ENCODE measurements at regions of chr12 and their contacts with region 1.

Region 1: DNA sequence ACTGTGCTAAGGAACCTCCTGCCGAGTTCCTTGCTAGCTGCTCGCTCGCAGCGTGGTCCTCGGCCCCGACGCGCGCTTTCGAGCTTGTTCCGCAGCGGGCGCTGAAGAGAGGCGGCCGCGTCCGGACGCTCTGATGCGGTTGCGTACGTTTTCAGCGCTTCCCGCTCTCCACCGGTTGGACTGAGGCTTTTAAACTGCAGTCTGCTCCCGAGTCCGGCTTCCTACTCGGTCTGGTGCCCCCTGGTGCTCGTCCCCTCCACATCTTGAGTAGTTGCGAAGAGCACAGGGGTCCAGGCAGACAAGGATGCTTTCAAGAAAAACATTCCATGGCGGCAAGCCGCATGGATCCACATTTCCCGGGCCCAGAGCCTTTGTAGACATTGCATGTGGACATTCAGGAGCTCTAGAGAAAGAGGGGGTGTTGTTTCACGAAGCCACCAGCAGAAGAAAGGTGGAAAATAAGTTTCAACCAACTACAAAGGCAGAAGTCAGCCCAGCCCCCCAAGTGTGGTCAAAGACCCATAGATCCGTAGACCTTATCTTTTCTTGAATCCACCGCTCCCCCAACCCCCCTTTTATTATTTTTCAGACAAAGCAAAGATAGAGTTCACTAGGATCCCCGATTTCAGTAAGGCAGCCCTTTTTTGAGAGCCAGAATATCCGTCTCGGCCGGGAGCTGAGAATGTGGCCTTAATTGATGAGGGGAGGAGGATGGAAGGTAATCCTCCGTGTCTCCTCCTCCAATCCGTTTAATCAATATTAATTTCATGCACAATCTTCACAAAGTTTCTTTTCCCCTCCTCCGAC is 984 bp upstream of the WNK1 start:
- DNase-seq: peak; percentile 78
- CTCF ChIP-seq: peak; percentile 68

Region 2: DNA sequence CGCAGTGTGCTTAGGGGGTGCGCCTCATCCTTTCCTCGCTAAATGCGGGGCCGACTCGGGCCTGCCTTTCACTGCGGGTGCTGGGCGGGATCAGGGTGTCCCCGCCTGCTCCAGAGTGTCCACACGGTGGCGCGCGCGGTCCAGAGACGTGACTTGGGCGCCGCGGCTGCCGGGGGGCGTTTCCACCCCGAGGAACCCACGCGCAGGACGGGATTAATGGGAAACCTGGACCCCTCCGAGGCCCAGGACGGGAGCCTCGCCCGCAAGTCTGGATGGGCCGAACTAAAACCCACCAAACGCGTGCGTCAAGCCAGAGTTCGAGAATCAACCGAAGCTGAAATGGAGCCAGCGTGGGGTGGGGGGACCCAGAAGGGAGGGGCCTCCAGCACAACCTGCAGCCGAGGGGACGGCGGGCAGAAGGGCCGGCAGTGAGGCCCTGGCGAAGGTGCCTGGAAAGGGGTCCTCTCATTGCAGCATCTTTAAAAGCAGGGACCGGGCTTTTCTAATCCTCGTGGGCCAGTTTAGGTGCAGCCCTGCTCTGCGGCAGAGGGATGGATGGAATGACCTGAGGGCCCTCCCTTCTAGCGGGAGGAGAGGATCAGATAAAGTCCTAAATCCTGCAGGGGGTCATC is 181.5 kb before region 1 on chr12:
- CTCF ChIA-PET with region 1: interaction called, 32 read pairs
- POLR2A ChIA-PET with region 1: no interaction called
- DNase-seq: peak; percentile 94
- CTCF ChIP-seq: peak; percentile 95

Region 3: GRCh38 chr12:614411-614970 is 136.9 kb before region 1 on chr12:
- CTCF ChIA-PET with region 1: interaction called, 52 read pairs
- POLR2A ChIA-PET with region 1: no interaction called
- DNase-seq: peak; percentile 63
- CTCF ChIP-seq: peak; percentile 59

Region 4: DNA sequence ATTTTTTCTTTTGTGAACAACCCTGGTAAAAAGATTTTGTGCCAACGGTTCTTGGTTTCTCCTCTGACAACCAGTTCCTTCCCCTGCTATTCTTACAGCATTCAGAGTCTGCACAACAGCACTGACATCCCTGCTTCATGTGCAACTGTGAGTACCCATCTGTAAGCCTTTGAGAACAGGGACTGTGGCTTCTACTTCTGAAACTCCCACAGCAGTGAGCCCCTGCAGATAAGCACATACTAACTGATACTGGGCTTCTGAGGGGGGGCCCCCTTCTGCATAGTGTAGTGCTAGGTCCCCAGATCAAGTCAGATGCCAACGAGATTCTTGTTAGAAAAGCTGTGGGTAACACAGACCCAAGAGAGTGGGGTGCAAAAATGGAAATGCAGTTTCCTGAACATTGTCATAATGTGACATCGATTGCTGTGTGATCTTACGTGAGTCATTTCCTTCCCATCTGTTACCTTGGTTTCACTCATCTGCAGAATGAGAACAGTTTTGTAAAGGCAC is 77.1 kb before region 1 on chr12:
- CTCF ChIA-PET with region 1: interaction called, 33 read pairs
- POLR2A ChIA-PET with region 1: interaction called, 9 read pairs
- DNase-seq: peak; percentile 66
- CTCF ChIP-seq: no peak

Region 5: GRCh38 chr12:724194-724855 is 27.1 kb before region 1 on chr12:
- CTCF ChIA-PET with region 1: interaction called, 40 read pairs
- POLR2A ChIA-PET with region 1: interaction called, 3 read pairs
- DNase-seq: no peak
- CTCF ChIP-seq: no peak

Region 6: DNA sequence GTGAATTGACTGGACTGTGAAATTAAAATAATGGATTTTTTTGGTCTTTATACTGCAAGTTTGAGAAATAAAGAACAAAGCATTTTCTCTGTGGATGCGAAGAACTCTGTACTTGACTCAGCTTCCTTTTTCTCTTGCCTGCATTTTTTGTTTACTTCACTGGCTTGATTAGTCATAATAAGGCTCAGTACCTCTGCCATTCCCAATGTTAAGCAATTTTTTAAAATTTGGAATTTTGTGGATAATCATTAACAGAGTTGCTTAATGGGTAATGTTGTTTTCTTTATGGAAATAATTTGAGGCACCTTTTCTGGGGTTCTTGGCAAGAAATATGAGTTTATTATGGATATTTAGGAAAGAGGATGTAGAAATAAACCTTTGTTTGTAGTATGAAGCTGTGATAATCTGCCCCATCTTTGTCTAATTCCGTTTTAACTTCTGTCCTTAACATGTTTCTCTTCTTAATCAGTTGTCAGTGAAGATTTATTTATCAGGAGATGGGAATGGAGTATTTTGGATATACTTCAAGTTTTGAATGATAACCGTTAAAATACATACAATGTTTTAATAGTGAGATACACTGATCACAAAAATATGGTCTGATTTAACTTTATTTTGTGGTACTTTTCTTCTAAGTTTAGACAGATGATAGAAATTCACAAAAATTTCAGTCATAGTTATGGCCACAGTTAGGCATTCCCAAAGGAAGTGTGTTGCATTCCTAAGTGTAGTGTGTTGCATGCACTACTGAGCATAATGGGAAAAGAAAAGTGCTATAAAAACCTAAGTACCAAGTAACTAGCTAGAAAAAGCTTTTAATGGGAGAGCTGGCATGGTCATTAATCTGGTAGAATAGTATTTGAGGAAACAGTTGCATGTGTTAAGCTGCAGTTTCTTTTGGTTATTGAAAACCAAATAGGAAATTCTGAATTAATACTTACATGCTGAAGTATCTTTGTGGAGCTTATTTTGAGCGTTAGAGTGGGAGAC is 28.6 kb after region 1 on chr12:
- CTCF ChIA-PET with region 1: interaction called, 18 read pairs
- POLR2A ChIA-PET with region 1: no interaction called
- DNase-seq: no peak
- CTCF ChIP-seq: no peak

Region 7: DNA sequence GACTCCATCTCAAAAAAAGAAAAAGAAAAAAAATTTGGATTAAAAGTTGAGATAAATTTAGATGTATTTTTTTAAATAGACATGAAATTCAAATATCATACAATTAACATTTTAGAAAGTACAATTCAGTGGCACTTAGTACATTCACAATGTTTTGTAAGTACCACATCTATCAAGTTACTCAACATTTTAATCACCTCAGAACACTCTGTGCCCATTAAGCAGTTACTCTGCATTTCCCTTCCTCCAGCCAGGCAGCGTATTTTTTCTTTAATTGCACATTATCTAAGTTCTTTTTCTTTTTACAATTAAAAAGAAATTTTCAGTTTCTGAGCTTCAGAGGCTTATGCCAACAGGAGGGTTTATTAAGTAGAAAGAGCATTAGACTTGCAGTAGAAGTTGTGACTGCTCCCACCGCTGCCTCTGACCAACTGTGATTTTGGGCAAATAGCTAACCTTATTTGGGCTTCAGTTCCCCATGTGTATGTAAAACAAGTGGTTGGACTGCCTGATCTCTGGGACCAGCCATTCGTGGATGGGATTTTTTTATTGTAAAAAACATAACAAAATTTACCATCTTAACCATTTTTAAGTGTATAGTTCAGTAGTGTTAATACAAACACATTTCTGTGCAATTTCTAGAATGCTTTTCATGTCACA is 66.7 kb after region 1 on chr12:
- CTCF ChIA-PET with region 1: interaction called, 31 read pairs
- POLR2A ChIA-PET with region 1: no interaction called
- DNase-seq: no peak
- CTCF ChIP-seq: no peak